Heart left ventricle (tissue), 16 donors: ENCODE measurements at regions of chr5 and their contacts with region 1.

Region 1: DNA sequence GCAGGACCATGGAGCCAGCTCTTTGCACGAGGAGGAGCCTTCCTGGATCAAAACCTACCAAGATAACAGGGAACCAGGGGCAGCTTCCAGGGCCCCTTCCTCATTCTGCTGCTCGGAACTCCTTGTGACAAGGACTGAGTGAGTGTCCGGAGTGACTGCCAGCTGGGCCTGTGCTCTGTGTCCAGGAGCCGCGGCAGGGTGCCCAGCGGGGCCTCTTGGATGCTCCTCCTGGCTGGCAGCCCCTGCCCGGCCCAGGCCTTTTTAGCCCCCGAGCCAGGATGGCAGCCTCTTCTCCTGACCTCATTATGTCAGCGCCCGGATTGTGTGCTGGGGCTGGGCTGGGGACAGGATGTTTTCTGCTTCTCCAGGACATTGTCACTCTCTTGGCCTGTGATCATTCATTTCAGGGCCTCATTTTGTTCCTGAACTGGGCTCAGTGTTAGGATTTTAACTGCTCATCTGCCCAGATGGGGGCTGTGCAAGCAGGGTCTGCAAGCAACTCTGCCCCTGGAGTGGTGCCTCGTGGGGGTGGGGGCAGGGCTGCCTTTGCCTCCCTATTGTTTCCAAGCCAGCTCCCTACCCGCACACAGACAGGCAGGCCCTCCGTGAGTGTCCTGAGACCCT is 161.7 kb downstream of the COL23A1 start:
- DNase-seq: peak; percentile 61 to 91 (median 85)
- ATAC-seq: peak; percentile 91 to 93 (median 91)
- H3K4me3 ChIP-seq: no peak overlapping the region
- H3K27ac ChIP-seq: peak overlapping the region; percentile 46 to 97 (median 76)
- H3K4me1 ChIP-seq: peaks cover 0 to 16% (median 4%) of the 10 kb centered on the region in 12 donors
- H3K27me3 ChIP-seq: no peaks in the 10 kb centered on the region
- CTCF ChIP-seq: no peak
- POLR2A ChIP-seq: no peak

Region 2: DNA sequence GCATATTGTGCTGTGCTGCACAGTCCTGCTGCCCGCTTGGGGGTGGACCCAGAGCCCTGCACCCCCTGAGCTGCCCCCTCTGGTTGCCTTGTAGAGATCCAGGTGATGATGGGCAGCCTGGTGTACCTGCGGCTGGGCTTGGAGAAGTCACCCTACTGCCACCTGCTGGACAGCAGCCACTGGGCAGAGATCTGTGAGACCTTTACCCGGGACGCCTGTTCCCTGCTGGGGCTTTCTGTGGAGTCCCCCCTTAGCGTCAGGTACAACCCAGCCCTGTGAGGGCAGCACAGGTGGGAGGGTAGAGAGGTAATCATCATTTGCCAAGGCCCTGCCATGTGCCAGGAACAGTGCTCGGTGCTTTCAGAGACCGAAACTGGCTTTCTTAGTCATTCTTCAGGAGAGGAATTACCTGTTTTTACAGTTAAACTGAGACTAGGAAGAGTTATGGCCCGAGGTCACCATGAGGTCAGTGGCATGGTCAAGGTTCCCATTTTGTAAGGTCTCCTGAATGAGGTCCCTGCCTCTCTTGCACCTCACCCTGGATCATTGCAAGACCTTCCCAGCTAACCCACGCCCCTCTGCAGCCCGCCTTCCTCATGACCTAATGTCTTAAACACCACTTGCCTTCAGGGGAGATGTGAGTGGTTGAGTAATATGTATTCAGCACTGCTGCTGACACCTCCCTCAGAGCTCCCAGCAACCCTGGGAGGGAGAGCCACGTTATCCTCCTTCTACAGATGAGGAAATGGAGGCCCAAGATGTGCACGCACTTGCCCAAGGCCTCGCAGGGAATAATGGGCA is 282.2 kb before region 1 on chr5:
- intact Hi-C with region 1: no loop called
- DNase-seq: peak; percentile 46 to 77 (median 57)
- ATAC-seq: peak in 3 of 4 donors; percentile 31 to 46 (median 43)
- H3K4me3 ChIP-seq: no peak overlapping the region
- H3K27ac ChIP-seq: no peak overlapping the region
- H3K4me1 ChIP-seq: peaks cover 0 to 11% (median 3%) of the 10 kb centered on the region in 12 donors
- H3K27me3 ChIP-seq: no peaks in the 10 kb centered on the region
- CTCF ChIP-seq: peak; percentile 51 to 75 (median 65)
- POLR2A ChIP-seq: no peak

Region 3: DNA sequence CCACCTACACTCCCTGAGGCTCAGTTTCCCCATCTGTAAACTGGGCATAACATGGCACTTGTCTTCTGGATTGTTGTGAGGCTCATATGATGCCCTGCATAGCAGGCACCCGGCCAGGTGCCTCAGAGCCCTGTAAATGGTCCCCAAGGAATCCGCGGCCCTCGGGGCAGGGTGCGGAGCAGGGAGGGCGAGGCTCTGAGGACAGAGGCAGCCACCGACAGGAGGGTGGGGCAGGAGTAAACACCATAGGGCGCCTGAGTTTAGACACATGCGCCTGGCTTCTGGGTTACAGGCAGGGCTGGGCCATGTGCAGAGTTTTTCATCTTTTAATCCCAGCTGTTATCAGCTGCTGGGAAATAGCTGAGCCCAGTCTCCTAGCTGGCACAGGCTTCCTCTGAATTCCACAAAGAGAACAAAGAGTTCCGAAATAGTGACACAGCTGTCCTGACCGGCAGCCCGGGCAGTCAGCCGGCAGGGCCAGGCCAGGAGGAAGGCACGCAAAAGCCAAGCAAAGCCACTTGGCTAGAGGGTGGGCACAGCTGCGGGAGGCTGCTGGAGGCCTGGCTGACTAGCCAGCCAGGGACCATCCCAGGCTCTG is 97.0 kb before region 1 on chr5:
- intact Hi-C with region 1: loop called in 2 of 10 experiments (anchors 2 to 5 kb)
- DNase-seq: peak; percentile 70 to 88 (median 81)
- ATAC-seq: peak; percentile 86 to 91 (median 88)
- H3K4me3 ChIP-seq: no peak overlapping the region
- H3K27ac ChIP-seq: peak overlapping the region; percentile 76 to 94 (median 85)
- H3K4me1 ChIP-seq: peaks cover 0 to 34% (median 20%) of the 10 kb centered on the region in 12 donors
- H3K27me3 ChIP-seq: no peaks in the 10 kb centered on the region
- CTCF ChIP-seq: no peak
- POLR2A ChIP-seq: peak in 1 of 2 donors; percentile 22

Region 4: DNA sequence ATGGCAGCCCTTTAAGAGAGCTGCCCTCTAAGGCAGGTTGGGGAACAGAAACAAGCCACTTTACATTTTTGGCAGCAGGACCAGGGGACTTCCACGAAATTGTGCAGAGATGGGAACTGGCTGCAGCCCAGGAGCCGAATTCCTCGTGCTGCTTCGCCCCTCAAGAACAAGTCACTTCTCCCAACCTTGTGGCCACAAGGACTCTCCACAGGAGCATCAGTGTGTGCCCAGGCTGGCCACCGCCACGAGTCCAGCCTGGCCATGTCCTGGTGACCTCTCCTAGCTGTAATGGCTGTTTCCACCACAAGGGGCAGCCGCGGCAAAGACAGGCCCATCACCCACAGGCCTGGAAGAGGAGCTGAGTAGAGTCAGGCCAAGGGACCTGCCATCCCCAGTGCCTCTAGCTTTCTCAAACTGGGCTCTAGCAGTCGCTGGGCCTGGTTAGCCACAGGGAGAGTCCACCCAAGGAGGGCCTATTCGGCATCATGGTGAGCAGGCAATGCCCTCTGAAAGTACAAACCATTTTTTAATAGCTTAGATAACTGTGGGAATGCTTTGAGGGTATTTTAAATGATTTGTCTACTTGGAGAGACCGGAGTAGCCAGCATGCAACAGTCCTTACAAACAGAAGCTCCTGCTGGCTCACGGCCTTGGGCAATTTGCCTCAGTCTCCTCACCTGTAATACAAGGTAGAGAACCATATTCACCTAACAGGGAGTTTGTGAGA is 32.7 kb after region 1 on chr5:
- intact Hi-C with region 1: loop called in 1 of 10 experiments (anchors 1 kb)
- DNase-seq: peak; percentile 81 to 89 (median 86)
- ATAC-seq: peak; percentile 94 to 98 (median 95)
- H3K4me3 ChIP-seq: peak overlapping the region in 2 of 12 donors; percentile 13 to 32
- H3K27ac ChIP-seq: peak overlapping the region; percentile 34 to 87 (median 70)
- H3K4me1 ChIP-seq: peaks cover 0 to 19% (median 7%) of the 10 kb centered on the region in 12 donors
- H3K27me3 ChIP-seq: no peaks in the 10 kb centered on the region
- CTCF ChIP-seq: peak; percentile 73 to 93 (median 84)
- POLR2A ChIP-seq: no peak

Region 5: GRCh38 chr5:178849316-178849715 is 420.9 kb after region 1 on chr5:
- intact Hi-C with region 1: no loop called
- DNase-seq: no peak
- ATAC-seq: no peak
- H3K4me3 ChIP-seq: no peak overlapping the region
- H3K27ac ChIP-seq: no peak overlapping the region
- H3K4me1 ChIP-seq: peaks cover 0 to 10% (median 0%) of the 10 kb centered on the region in 12 donors
- H3K27me3 ChIP-seq: no peaks in the 10 kb centered on the region
- CTCF ChIP-seq: no peak
- POLR2A ChIP-seq: no peak